Activated CD8-positive, alpha-beta T cell treated with anti-CD3 and anti-CD28 coated beads for 36 hours (primary cell): ENCODE measurements at regions of chr5 and their contacts with region 1.

Region 1: DNA sequence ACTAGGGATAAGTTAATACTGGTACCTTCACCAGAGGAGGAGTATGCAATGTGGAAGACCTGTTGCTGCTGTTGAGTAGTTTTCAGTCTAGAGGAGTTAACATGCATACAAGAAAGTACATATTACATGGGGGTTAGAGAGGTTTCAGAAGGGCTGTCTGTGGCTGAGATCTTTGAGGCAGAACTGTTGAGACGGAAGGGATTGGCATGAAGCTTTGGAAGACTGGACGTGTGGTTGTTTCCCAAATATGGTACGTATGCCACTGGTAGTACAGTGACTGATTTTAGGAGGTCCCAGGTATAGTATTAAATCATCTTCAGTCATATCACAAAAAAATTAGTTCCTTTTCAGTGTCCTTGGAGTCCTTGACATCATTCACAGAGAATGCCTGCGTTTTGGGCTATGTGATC is 17.6 kb downstream of the TNFAIP8 start:
- DNase-seq: no peak
- ATAC-seq: no peak
- H3K4me3 Mint-ChIP-seq: no peak overlapping the region
- H3K27ac Mint-ChIP-seq: peak overlapping the region; percentile 54
- H3K4me1 Mint-ChIP-seq: peaks cover 72% of the 10 kb centered on the region
- H3K27me3 Mint-ChIP-seq: no peaks in the 10 kb centered on the region
- CTCF ChIP-seq: no peak

Region 2: DNA sequence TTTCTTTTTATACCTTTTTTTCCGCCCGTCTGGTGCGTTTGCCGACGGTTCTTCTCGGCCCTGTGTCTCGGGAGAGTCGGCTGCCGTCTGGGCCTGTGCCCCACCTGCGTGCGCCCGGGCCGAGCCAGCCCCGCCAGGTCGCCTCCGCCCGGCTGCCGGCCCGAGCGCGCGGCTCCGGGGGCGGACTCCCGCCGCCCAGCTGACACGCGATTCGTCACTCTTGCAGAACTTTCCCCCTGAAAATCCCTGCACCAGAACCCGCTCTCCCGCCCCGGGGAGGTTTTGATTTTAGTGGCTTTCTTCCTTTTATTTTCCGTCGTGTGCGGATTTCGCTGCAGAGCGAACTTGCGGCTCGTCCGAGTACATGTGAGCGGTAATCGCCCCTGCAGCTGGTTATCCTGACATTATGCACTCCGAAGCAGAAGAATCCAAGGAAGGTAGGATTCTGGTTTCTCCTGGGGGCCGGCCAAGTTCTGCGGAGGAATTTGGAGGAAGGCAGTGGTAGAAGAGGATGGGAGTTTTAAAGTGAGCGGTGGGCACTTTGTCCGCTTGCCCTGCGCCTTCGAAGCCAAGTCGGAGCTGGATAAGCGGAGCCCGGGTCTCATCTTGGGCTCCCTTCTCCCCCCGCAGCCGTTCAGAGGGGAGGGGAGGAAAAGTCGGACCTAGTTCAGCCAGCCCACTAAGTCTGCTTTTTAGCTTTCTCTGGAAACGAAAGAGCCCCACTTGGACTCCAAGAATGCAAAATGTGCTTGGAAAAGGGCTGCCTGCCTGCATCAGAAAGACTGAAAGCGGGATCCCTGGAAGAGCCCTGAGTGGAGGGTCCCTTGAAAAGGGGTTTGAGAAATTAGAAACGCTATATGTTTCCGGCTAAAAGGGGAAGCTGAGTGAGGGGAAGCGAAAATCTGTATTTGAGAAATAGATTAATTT is 17.5 kb before region 1 on chr5 and contains the start of gene TNFAIP8:
- CTCF ChIA-PET with region 1: interaction called, 4 read pairs
- POLR2A ChIA-PET with region 1: interaction called, 71 read pairs
- intact Hi-C with region 1: no loop called
- DNase-seq: peak; percentile 85
- ATAC-seq: peak; percentile 63
- H3K4me3 Mint-ChIP-seq: peak within 1 kb of the TSS; percentile 98
- H3K27ac Mint-ChIP-seq: peak within 1 kb of the TSS; percentile 97
- H3K4me1 Mint-ChIP-seq: peaks cover 62% of the 10 kb centered on the region
- H3K27me3 Mint-ChIP-seq: no peaks in the 10 kb centered on the region
- CTCF ChIP-seq: no peak
- total RNA-seq, gene TNFAIP8: 135 to 141 TPM

Region 3: GRCh38 chr5:119389288-119390030 is 16.0 kb after region 1 on chr5:
- CTCF ChIA-PET with region 1: interaction called, 4 read pairs
- POLR2A ChIA-PET with region 1: interaction called, 14 read pairs
- intact Hi-C with region 1: no loop called
- DNase-seq: no peak
- ATAC-seq: peak; percentile 40
- H3K4me3 Mint-ChIP-seq: no peak overlapping the region
- H3K27ac Mint-ChIP-seq: peak overlapping the region; percentile 86
- H3K4me1 Mint-ChIP-seq: peaks cover 89% of the 10 kb centered on the region
- H3K27me3 Mint-ChIP-seq: no peaks in the 10 kb centered on the region
- CTCF ChIP-seq: no peak